Calu3 (cell line): ENCODE measurements at regions of chr3 and their contacts with region 1.

Region 1: DNA sequence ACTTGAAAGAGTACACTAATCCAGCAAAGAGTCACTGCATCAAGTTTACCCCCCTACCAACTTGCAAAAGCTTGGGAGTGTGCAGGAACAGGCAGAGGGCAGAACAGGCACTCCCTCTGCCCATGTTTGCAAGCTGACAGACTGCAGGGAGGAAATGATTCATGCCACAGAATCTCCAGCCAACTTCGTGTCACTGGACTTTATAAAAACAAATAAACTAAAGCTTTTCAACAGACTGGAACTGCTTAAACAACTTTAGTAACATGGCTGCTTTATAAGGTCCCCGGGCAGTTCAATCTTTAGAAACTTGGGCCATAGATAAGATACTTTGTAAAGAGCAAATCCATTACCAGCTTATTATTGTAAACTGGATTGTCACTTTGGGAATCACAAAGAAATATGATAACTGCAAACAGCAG is 129.4 kb downstream of the THRB start:
- DNase-seq: peak; percentile 59
- H3K4me3 Mint-ChIP-seq: no peak overlapping the region
- H3K27ac Mint-ChIP-seq: peak overlapping the region; percentile 42
- H3K4me1 Mint-ChIP-seq: peaks cover 42% of the 10 kb centered on the region
- H3K27me3 Mint-ChIP-seq: no peaks in the 10 kb centered on the region
- CTCF ChIP-seq: no peak

Region 2: GRCh38 chr3:24270204-24270691 is 95.0 kb before region 1 on chr3:
- CTCF ChIA-PET with region 1: no interaction called
- intact Hi-C with region 1: loop called (anchors 5 kb)
- DNase-seq: no peak
- H3K4me3 Mint-ChIP-seq: no peak overlapping the region
- H3K27ac Mint-ChIP-seq: no peak overlapping the region
- H3K4me1 Mint-ChIP-seq: peaks cover 38% of the 10 kb centered on the region
- H3K27me3 Mint-ChIP-seq: no peaks in the 10 kb centered on the region
- CTCF ChIP-seq: no peak

Region 3: GRCh38 chr3:24545913-24546312 is 180.7 kb after region 1 on chr3:
- CTCF ChIA-PET with region 1: no interaction called
- intact Hi-C with region 1: no loop called
- DNase-seq: no peak
- H3K4me3 Mint-ChIP-seq: no peak overlapping the region
- H3K27ac Mint-ChIP-seq: no peak overlapping the region
- H3K4me1 Mint-ChIP-seq: peaks cover 17% of the 10 kb centered on the region
- H3K27me3 Mint-ChIP-seq: no peaks in the 10 kb centered on the region
- CTCF ChIP-seq: no peak

Region 4: GRCh38 chr3:24640330-24640877 is 275.2 kb after region 1 on chr3:
- CTCF ChIA-PET with region 1: no interaction called
- intact Hi-C with region 1: loop called (anchors 10 kb)
- DNase-seq: peak; percentile 32
- H3K4me3 Mint-ChIP-seq: no peak overlapping the region
- H3K27ac Mint-ChIP-seq: no peak overlapping the region
- H3K4me1 Mint-ChIP-seq: peaks cover 20% of the 10 kb centered on the region
- H3K27me3 Mint-ChIP-seq: no peaks in the 10 kb centered on the region
- CTCF ChIP-seq: peak; percentile 59